H1 (cell line): ENCODE measurements at regions of chr11 and their contacts with region 1.

Region 1: DNA sequence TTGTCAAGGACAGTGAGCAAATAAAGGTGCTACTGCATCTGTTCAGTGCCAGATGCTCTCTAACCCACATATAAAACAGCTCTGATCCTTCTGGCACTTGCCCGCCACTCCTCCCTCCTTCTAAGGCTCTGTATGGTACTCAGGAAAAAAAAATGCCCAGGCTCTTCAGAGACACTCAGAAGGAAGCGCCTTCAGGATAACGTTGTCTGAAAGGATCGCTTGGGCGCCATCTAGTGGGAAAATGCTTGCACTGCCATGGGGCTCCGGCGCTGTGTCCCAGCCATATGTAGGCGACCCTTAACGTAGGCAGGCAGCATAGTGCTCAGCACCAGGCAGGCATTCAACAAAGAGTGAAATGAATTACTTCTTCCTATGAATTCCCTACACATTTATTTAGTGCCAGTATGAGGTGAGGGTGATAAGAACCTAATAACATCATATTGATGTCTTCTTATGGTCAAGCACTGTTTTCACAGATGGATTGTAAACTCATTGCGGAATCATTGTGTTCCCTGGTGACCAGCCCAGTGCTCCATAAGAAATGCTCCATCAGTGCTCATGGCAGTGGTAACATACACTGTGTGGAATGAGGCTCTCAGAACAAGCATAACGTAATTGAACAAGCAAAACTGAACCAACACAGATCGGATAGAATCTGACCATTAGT is 39.6 kb downstream of the PAMR1 start:
- DNase-seq: peak; percentile 71 to 95
- H3K4me3 ChIP-seq: no peak overlapping the region
- H3K27ac ChIP-seq: no peak overlapping the region
- H3K4me1 ChIP-seq: no peaks in the 10 kb centered on the region
- H3K27me3 ChIP-seq: no peaks in the 10 kb centered on the region; a peak in 1 of 7 replicates
- CTCF ChIP-seq: peak; percentile 85 to 90 (median 89)
- EP300 ChIP-seq: no peak
- POLR2A ChIP-seq: no peak
- RAD21 ChIP-seq: peak; percentile 80 to 85

Region 2: DNA sequence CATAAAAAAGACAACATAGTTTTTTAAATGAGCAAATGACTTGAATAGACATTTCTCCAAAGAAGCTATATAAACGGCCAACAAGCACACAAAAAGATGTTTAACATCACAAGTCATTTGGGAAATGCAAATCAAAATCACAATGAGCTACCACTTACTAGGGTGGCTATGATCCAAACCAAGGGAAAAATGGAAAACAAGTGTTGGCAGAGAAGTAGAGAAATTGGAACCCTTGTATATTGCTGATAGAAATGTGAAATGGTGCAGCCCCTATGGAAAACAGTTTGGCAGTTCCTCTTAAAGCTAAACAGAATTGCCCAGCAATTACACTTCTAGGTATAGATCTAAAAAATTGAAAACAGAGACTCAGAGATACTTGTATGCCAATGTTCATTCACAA is 10.6 kb after region 1 on chr11:
- CTCF ChIA-PET with region 1: interaction called, 22 read pairs
- POLR2A ChIA-PET with region 1: no interaction called
- DNase-seq: no peak
- H3K4me3 ChIP-seq: no peak overlapping the region
- H3K27ac ChIP-seq: no peak overlapping the region
- H3K4me1 ChIP-seq: 0 out of 7 replicates have a peak, but pooled peaks cover 0 to 2% (median 0%) of the 10 kb centered on the region in 4 experiments
- H3K27me3 ChIP-seq: peaks cover 0 to 1% (median 0%) of the 10 kb centered on the region in 4 experiments; a peak in 3 of 7 replicates
- CTCF ChIP-seq: no peak
- EP300 ChIP-seq: no peak
- POLR2A ChIP-seq: no peak
- RAD21 ChIP-seq: no peak

Region 3: GRCh38 chr11:35525501-35526175 is 39.8 kb after region 1 on chr11 and contains the start of gene PAMR1:
- CTCF ChIA-PET with region 1: interaction called, 18 read pairs
- POLR2A ChIA-PET with region 1: no interaction called
- DNase-seq: peak; percentile 54 to 78
- H3K4me3 ChIP-seq: peak within 1 kb of the TSS; percentile 50 to 67 (median 56)
- H3K27ac ChIP-seq: no peak within 1 kb of the TSS
- H3K4me1 ChIP-seq: peaks cover 0 to 4% (median 2%) of the 10 kb centered on the region in 4 experiments; a peak in 2 of 7 replicates
- H3K27me3 ChIP-seq: peaks cover 0 to 9% (median 8%) of the 10 kb centered on the region in 4 experiments; a peak in 4 of 7 replicates
- CTCF ChIP-seq: no peak
- EP300 ChIP-seq: no peak
- POLR2A ChIP-seq: peak in 1 of 2 experiments; percentile 46; a peak in 1 of 3 replicates
- RAD21 ChIP-seq: no peak
- total RNA-seq, gene PAMR1: 3.0 TPM in 2 replicates

Region 4: DNA sequence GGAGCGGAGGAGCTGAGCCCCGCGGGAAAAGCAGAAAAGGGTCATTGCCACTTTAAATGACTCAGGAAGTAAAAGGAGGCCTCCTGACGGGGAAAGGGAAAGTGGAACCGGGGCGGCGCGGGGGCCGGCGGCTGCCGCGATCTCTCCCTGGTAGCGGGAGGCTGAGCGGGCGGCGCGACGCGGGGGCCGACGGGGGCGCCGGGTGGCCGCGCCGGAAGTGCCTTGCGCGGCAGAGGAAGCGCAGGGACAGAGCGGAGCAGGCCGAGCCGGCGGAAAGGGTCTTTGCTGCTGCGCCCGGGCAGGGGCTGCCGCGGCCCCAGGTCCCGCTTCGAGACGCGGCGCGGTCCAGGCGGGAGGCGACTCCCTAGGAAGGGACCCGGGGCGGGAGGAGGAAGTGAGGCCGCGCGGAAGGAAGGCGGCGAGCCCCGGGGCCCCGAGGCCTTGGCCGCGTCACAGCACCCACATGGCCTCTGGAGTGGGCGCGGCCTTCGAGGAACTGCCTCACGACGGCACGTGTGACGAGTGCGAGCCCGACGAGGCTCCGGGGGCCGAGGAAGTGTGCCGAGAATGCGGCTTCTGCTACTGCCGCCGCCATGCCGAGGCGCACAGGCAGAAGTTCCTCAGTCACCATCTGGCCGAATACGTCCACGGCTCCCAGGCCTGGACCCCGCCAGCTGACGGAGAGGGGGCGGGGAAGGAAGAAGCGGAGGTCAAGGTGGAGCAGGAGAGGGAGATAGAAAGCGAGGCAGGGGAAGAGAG is 177.0 kb after region 1 on chr11 and contains the start of gene TRIM44:
- CTCF ChIA-PET with region 1: no interaction called
- POLR2A ChIA-PET with region 1: no interaction called
- DNase-seq: peak; percentile 31 to 82
- H3K4me3 ChIP-seq: peak within 1 kb of the TSS; percentile 43 to 70 (median 52)
- H3K27ac ChIP-seq: peak within 1 kb of the TSS; percentile 44; the same call in 1 of the 2 replicates
- H3K4me1 ChIP-seq: peaks cover 0 to 5% (median 3%) of the 10 kb centered on the region in 4 experiments; a peak in 3 of 7 replicates
- H3K27me3 ChIP-seq: peaks cover 1 to 32% (median 20%) of the 10 kb centered on the region in 4 experiments
- CTCF ChIP-seq: no peak
- EP300 ChIP-seq: no peak
- POLR2A ChIP-seq: no peak; a peak in 1 of 3 replicates
- RAD21 ChIP-seq: no peak; a peak in 1 of 4 replicates
- total RNA-seq, gene TRIM44: 34.4 and 34.7 TPM in 2 replicates